ENCODE measurements at regions of chr2 and their contacts with region 1.

Region 1: DNA sequence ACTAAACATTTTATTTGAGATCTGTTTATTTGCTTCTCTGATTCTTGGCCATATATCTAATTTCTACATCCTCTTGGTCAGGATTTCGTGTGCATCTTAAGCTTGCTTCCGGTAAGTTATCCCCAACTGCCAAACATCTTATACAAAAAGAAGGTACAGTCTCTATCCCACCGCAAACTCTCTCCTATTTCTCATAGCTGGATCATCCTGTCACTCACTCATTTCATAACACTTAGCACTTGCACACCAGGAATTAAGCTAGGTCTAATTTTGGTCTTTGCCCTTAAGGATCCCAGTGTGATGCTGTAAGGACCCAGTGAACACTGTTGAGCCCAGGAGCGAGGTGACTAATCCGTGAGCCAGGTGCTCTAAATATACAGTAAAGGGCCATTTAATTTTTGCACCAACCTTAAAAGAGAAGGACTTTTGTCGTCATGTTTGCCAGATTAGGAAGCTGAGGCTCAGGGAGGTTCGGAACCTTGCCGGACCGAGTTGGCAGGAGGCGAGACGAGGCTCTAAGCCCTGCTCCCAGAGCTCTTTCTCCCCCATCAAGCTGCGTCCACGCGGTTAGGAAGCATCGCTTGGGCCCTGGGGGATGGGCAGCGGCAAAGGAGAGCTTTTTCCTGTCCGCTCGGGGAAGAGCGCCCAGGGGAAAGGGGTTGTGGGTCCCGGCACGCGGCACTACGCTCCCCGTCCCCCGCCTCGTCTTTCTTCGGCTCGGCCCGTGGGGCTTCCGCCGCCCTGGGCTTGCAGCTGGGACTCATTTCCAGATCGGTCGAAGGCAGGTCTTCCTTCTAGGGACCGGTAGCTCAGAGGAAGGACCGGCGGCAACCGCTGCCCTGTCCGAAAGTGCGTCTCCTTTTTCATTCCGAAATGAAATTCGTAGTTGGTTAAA is 4.1 kb upstream of the ITPRIPL1 start:
- DNase-seq: peak in 2 of 3 donors; percentile 48 to 62
- H3K4me3 ChIP-seq: peak overlapping the region; percentile 62 to 87 (median 84)
- H3K27ac ChIP-seq: peak overlapping the region; percentile 15 to 74
- H3K4me1 ChIP-seq: peaks cover 13 to 71% (median 64%) of the 10 kb centered on the region in 4 experiments
- H3K27me3 ChIP-seq: no peaks in the 10 kb centered on the region

Region 2: DNA sequence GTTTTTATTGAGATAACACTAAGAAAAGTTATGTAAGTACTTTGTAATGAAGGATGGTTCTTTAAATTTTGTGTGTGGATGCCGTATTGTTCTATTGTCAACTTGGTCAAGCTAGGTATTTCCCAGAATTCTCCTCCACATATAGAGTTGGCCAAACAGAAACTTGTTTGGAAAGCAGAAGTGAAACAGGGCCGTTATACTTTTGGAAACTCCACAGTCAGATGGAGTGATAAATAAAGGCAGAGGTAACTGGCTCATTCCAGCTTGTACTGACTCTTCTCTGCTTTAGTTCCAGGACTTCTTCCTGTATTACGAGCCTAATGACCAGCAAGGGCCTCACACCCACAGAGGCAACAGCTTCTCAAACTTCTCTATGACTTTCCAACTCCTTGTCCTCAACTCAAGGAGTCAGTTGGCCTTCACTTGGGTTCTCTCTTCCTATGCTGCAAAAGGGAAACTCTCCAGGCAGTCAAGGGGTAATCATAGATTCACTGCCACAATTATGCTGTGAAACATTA is 95.9 kb before region 1 on chr2:
- CTCF ChIA-PET with region 1: no interaction called
- POLR2A ChIA-PET with region 1: no interaction called
- DNase-seq: peak in 2 of 3 donors; percentile 49 to 55
- H3K4me3 ChIP-seq: peak overlapping the region in 3 of 7 experiments; percentile 6 to 33 (median 12)
- H3K27ac ChIP-seq: peak overlapping the region; percentile 26 to 45
- H3K4me1 ChIP-seq: peaks cover 0 to 19% (median 8%) of the 10 kb centered on the region in 4 experiments
- H3K27me3 ChIP-seq: no peaks in the 10 kb centered on the region

Region 3: GRCh38 chr2:96291751-96292150 is 29.2 kb before region 1 on chr2:
- CTCF ChIA-PET with region 1: no interaction called
- POLR2A ChIA-PET with region 1: no interaction called
- DNase-seq: no peak
- H3K4me3 ChIP-seq: no peak overlapping the region
- H3K27ac ChIP-seq: no peak overlapping the region
- H3K4me1 ChIP-seq: no peaks in the 10 kb centered on the region
- H3K27me3 ChIP-seq: no peaks in the 10 kb centered on the region

Region 4: GRCh38 chr2:96305091-96305978 is 15.6 kb before region 1 on chr2 and contains the start of gene SNRNP200:
- CTCF ChIA-PET with region 1: interaction called, 25 read pairs
- POLR2A ChIA-PET with region 1: interaction called, 6 read pairs
- DNase-seq: peak; percentile 91 to 92 (median 91)
- H3K4me3 ChIP-seq: peak within 1 kb of the TSS; percentile 77 to 97 (median 94)
- H3K27ac ChIP-seq: peak within 1 kb of the TSS; percentile 74 to 94
- H3K4me1 ChIP-seq: peaks cover 11 to 25% (median 17%) of the 10 kb centered on the region in 4 experiments
- H3K27me3 ChIP-seq: no peaks in the 10 kb centered on the region

Region 5: DNA sequence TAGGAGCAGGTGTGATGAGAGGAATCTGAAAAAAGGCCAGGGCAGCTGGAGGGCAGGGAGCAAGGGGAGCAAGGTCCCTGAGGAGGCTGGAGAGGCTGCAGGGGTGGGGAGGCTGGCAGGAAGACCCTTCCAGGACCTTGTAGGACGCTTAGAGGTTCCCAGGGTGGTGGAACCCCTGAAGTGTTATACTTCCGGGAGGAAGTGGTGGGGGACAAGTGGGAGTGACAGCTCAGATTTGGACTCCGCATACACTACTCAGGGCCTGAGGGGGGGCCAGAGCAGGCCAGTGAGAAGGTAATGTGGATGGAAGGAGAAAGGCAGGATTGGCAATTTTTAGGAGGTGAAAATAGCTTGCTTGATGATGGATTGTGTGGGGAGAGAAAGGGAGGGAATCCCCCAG is 12.7 kb after region 1 on chr2:
- CTCF ChIA-PET with region 1: interaction called, 17 read pairs
- POLR2A ChIA-PET with region 1: interaction called, 6 read pairs
- DNase-seq: no peak
- H3K4me3 ChIP-seq: no peak overlapping the region
- H3K27ac ChIP-seq: no peak overlapping the region
- H3K4me1 ChIP-seq: peaks cover 10 to 30% (median 20%) of the 10 kb centered on the region in 4 experiments
- H3K27me3 ChIP-seq: no peaks in the 10 kb centered on the region

Region 6: GRCh38 chr2:96344011-96344410 is 23.0 kb after region 1 on chr2:
- CTCF ChIA-PET with region 1: interaction called, 29 read pairs
- POLR2A ChIA-PET with region 1: interaction called, 3 read pairs
- DNase-seq: peak in 2 of 3 donors; percentile 41 to 52
- H3K4me3 ChIP-seq: no peak overlapping the region
- H3K27ac ChIP-seq: no peak overlapping the region
- H3K4me1 ChIP-seq: no peaks in the 10 kb centered on the region
- H3K27me3 ChIP-seq: no peaks in the 10 kb centered on the region

Region 7: GRCh38 chr2:96407041-96407918 is 86.3 kb after region 1 on chr2:
- CTCF ChIA-PET with region 1: no interaction called
- POLR2A ChIA-PET with region 1: no interaction called
- DNase-seq: peak; percentile 85 to 92 (median 91)
- H3K4me3 ChIP-seq: peak overlapping the region in 2 of 7 experiments; percentile 22 to 45
- H3K27ac ChIP-seq: no peak overlapping the region
- H3K4me1 ChIP-seq: peaks cover 0 to 23% (median 14%) of the 10 kb centered on the region in 4 experiments
- H3K27me3 ChIP-seq: peaks cover 0 to 2% (median 0%) of the 10 kb centered on the region in 5 experiments

Region 8: GRCh38 chr2:96423828-96424227 is 102.9 kb after region 1 on chr2:
- CTCF ChIA-PET with region 1: no interaction called
- POLR2A ChIA-PET with region 1: no interaction called
- DNase-seq: no peak
- H3K4me3 ChIP-seq: no peak overlapping the region
- H3K27ac ChIP-seq: no peak overlapping the region
- H3K4me1 ChIP-seq: no peaks in the 10 kb centered on the region
- H3K27me3 ChIP-seq: no peaks in the 10 kb centered on the region